ENCODE measurements at regions of chr16 and their contacts with region 1.

Region 1: DNA sequence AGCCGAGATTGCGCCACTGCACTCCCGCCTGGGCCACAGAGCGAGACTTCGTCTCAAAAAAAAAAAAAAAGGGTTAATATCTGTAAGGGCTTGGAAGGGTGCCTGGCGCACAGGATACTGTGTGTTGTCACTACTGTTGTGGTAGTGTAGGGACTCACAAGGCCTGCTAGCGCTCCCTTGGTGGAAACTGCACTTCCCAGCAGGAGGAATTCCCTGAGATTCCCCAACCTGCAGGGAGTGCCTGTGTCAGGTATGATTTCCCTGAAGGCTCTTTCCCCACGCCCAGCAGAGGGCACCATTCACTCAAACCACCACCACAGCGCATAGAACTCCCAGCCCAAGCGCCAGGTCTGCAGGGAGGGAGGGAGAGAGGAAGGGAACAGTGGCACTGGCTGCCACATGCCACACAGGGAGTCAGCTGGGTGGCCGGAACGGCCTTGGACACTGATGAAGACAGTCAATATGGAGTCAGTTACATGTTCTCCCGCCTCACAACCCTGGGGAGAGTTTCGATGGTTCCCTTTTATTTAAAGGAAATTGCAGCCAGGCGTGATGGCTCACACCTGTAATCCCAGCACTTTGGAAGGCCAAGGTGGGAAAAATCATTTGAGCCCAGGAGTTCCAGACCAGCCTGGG is 32.7 kb upstream of the CDH1 start:
- DNase-seq: peak; percentile 71 to 83 (median 74)
- ATAC-seq: peak; percentile 90
- H3K4me3 ChIP-seq: no peak overlapping the region
- H3K27ac ChIP-seq: no peak overlapping the region
- H3K4me1 ChIP-seq: peaks cover 9 to 13% of the 10 kb centered on the region in 2 experiments; a peak in 4 of 5 replicates
- H3K27me3 ChIP-seq: peaks cover 11 to 16% of the 10 kb centered on the region in 2 experiments
- CTCF ChIP-seq: peak; percentile 88 to 95 (median 94)
- EP300 ChIP-seq: no peak
- POLR2A ChIP-seq: no peak
- RAD21 ChIP-seq: peak; percentile 90 to 99

Region 2: DNA sequence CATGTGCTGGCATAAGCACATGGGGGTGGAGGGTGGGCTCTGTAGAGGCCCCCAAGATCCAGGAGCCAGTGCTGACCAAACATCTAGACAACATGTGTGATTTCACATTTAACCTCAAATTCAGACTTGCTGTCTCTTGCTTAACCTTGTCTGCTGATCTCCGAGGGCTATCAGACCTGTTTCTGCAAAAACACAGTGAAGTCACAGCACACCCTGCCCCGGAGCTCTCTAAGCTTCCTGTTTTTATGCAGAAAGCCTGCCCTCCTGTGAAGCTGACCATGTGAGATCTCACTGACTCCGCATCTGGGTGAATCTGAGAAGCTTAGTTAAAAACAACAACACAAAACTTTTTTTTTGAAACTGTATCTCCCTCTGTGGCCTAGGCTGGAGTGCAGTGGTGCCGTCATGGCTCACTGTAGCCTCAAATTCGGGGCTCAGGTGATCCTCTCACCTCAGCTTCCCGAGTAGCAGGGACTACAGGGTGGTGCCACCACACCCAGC is 698.5 kb before region 1 on chr16:
- CTCF ChIA-PET with region 1: no interaction called
- POLR2A ChIA-PET with region 1: no interaction called
- in situ Hi-C with region 1: no loop called
- intact Hi-C with region 1: no loop called
- DNase-seq: peak in 1 of 4 experiments; percentile 33
- ATAC-seq: peak; percentile 77
- H3K4me3 ChIP-seq: no peak overlapping the region
- H3K27ac ChIP-seq: peak overlapping the region; percentile 34; the same call in 1 of the 3 replicates
- H3K4me1 ChIP-seq: peaks cover 0 to 4% of the 10 kb centered on the region in 2 experiments; a peak in 2 of 5 replicates
- H3K27me3 ChIP-seq: no peaks in the 10 kb centered on the region
- CTCF ChIP-seq: no peak
- EP300 ChIP-seq: no peak
- POLR2A ChIP-seq: no peak
- RAD21 ChIP-seq: no peak

Region 3: DNA sequence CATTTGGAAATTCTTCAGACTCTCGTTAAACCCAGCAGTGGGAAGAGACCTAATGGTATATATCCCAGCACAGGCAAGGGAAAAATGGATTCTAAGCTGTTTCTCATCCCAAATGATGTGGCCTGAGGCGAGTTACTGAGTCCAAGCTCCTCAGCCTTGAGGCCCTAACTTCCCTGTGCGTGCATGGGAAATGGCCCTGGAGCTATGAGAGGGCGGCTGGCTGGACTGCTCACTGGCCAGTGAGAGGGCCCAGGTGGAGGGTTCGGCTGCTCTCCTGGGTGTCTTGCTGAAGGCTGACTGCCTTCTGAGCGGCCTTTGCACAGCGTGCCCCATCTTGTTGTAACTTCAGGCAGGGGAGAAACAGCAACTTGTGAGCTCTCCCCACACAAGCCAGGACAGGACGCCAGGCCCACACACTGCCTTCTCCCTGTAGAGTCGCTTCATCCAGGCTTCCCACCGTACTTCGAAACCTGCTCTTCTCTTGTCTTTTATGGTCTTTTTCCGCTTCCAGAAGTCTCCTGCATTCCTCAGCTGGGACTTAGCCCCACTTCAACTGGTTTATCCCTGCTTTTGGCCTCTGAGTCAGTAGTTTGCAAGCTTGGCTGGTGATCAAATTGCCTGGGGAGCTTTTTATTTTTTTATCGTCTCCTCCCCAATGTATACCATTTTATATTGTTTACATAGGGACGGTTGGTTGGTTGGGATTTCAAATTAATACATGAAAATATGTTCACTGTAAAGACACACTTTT is 45.9 kb before region 1 on chr16:
- CTCF ChIA-PET with region 1: no interaction called
- POLR2A ChIA-PET with region 1: no interaction called
- in situ Hi-C with region 1: no loop called
- intact Hi-C with region 1: no loop called
- DNase-seq: no peak
- ATAC-seq: no peak
- H3K4me3 ChIP-seq: no peak overlapping the region
- H3K27ac ChIP-seq: no peak overlapping the region
- H3K4me1 ChIP-seq: no peaks in the 10 kb centered on the region
- H3K27me3 ChIP-seq: peaks cover 13 to 40% of the 10 kb centered on the region in 2 experiments
- CTCF ChIP-seq: no peak
- EP300 ChIP-seq: no peak
- POLR2A ChIP-seq: no peak
- RAD21 ChIP-seq: no peak

Region 4: DNA sequence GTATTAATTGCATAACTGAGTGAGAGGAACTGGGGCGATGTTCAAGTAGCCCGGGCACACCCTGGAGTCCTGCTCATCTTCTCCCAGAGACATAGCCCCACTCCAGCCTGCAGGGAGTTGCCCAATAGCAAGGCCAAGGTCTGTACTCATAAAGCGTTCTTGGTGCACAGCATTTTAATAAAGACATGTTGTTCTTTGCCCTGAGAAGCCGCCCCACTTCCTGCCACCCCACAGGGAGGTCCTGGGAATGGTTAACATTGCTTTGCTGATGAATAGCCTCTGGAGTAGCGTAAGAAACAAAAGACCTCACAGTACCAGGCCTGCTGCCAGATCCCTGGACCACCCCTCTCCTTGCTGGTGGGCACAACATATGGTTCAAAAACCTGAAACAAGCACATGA is 11.1 kb after region 1 on chr16:
- CTCF ChIA-PET with region 1: no interaction called
- POLR2A ChIA-PET with region 1: no interaction called
- in situ Hi-C with region 1: no loop called
- intact Hi-C with region 1: no loop called
- DNase-seq: no peak
- ATAC-seq: no peak
- H3K4me3 ChIP-seq: no peak overlapping the region
- H3K27ac ChIP-seq: no peak overlapping the region
- H3K4me1 ChIP-seq: peaks cover 0 to 5% of the 10 kb centered on the region in 2 experiments; a peak in 2 of 5 replicates
- H3K27me3 ChIP-seq: peaks cover 0 to 6% of the 10 kb centered on the region in 2 experiments; a peak in 2 of 5 replicates
- CTCF ChIP-seq: no peak
- EP300 ChIP-seq: no peak
- POLR2A ChIP-seq: no peak
- RAD21 ChIP-seq: no peak

Region 5: GRCh38 chr16:68800257-68800875 is 96.0 kb after region 1 on chr16:
- CTCF ChIA-PET with region 1: interaction called, 60 read pairs
- POLR2A ChIA-PET with region 1: interaction called, 3 read pairs
- in situ Hi-C with region 1: loop called (anchors 5 kb)
- intact Hi-C with region 1: loop called (anchors 1 kb)
- DNase-seq: peak; percentile 62 to 80 (median 66)
- ATAC-seq: peak; percentile 98
- H3K4me3 ChIP-seq: no peak overlapping the region
- H3K27ac ChIP-seq: no peak overlapping the region
- H3K4me1 ChIP-seq: no peaks in the 10 kb centered on the region; a peak in 1 of 5 replicates
- H3K27me3 ChIP-seq: peaks cover 0 to 11% of the 10 kb centered on the region in 2 experiments; a peak in 2 of 5 replicates
- CTCF ChIP-seq: peak; percentile 77 to 94 (median 83)
- EP300 ChIP-seq: no peak
- POLR2A ChIP-seq: no peak
- RAD21 ChIP-seq: peak; percentile 89 to 95

Region 6: GRCh38 chr16:69112285-69113129 is 408.2 kb after region 1 on chr16:
- CTCF ChIA-PET with region 1: no interaction called
- POLR2A ChIA-PET with region 1: no interaction called
- in situ Hi-C with region 1: loop called (anchors 10 kb)
- intact Hi-C with region 1: no loop called
- DNase-seq: peak; percentile 78 to 81 (median 80)
- ATAC-seq: peak; percentile 98
- H3K4me3 ChIP-seq: no peak overlapping the region
- H3K27ac ChIP-seq: no peak overlapping the region
- H3K4me1 ChIP-seq: peaks cover 7 to 20% of the 10 kb centered on the region in 2 experiments; a peak in 4 of 5 replicates
- H3K27me3 ChIP-seq: no peaks in the 10 kb centered on the region
- CTCF ChIP-seq: peak; percentile 81 to 90 (median 88)
- EP300 ChIP-seq: no peak
- POLR2A ChIP-seq: no peak
- RAD21 ChIP-seq: peak; percentile 35 to 64

Region 7: DNA sequence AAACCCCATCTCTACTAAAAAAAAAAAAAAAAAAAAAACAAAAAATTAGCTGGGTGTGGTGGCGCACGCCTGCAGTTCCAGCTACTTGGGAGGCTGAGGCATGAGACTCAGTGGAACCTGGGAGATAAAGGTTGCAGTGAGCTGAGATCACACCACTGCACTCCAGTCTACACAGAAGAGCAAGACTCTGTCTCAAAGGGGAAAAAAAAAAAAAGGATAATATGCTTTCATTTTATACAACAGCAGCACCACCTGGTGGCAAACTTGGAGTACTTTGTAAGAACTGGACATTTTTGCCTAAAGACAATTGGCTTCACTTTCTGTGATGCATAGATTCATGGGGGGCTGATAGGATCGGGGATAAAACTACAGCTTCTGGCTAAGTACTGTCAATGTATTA is 419.6 kb after region 1 on chr16:
- CTCF ChIA-PET with region 1: interaction called, 3 read pairs
- POLR2A ChIA-PET with region 1: no interaction called
- in situ Hi-C with region 1: loop called (anchors 10 kb)
- intact Hi-C with region 1: loop called (anchors 10 kb)
- DNase-seq: peak; percentile 39 to 80 (median 44)
- ATAC-seq: peak; percentile 79
- H3K4me3 ChIP-seq: no peak overlapping the region
- H3K27ac ChIP-seq: no peak overlapping the region
- H3K4me1 ChIP-seq: peaks cover 0 to 4% of the 10 kb centered on the region in 2 experiments; a peak in 2 of 5 replicates
- H3K27me3 ChIP-seq: no peaks in the 10 kb centered on the region
- CTCF ChIP-seq: peak; percentile 59 to 81 (median 70)
- EP300 ChIP-seq: no peak
- POLR2A ChIP-seq: no peak
- RAD21 ChIP-seq: peak; percentile 42 to 67

Measured in K562 (cell line).